HCT116 (cell line): ENCODE measurements at regions of chr10 and their contacts with region 1.

Region 1: DNA sequence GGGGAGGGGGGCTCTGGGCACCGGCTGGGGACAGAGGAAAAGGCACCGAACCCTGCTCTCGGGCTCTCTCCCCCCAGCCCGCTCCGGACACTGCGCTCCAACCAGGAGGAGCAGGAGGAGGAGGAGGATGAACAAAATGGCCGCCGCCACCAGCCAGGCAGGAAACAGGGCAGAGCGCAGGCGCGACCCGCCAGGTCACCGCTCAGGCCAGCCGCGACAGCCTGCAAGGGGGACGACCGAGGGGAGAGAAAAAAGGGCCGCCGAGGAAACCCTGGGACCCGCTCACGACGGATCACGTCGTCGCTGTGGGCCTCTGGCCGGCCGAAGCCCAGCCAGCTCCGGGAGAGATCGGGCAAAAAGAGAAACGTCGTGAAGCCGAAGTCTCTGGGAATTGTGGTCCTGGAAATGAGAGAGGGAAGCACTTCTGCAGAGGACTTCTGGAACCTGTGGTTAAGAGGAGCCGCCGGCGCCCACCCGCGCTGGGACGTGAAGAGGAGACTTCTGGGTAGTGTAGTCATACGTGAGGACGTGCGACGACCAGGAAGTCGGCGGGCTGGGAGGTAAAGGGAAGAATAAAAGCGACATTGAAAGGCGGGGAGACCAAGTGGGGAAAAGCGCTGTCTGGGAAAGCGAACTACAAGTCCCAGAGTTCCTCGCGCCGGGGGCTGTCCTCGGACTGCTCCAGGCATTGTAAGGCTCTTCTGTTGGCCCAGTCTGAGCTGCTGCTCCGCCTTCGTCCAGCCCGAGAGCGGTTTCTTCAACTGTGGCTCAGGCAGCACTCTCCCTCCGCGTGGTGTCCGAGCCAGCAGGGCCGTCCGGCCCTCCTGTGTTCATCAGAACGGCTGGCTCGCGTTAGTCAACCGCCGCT is at the start of gene TIAL1:
- DNase-seq: peak; percentile 100
- ATAC-seq: peak; percentile 88
- H3K4me3 ChIP-seq: peak within 1 kb of the TSS; percentile 85 to 88
- H3K27ac ChIP-seq: peak within 1 kb of the TSS; percentile 97
- H3K4me1 ChIP-seq: peaks cover 13 to 23% of the 10 kb centered on the region in 2 experiments
- H3K27me3 ChIP-seq: no peaks in the 10 kb centered on the region
- CTCF ChIP-seq: no peak
- POLR2A ChIP-seq: peak; percentile 97
- RAD21 ChIP-seq: no peak
- total RNA-seq, gene TIAL1: 220 TPM

Region 2: DNA sequence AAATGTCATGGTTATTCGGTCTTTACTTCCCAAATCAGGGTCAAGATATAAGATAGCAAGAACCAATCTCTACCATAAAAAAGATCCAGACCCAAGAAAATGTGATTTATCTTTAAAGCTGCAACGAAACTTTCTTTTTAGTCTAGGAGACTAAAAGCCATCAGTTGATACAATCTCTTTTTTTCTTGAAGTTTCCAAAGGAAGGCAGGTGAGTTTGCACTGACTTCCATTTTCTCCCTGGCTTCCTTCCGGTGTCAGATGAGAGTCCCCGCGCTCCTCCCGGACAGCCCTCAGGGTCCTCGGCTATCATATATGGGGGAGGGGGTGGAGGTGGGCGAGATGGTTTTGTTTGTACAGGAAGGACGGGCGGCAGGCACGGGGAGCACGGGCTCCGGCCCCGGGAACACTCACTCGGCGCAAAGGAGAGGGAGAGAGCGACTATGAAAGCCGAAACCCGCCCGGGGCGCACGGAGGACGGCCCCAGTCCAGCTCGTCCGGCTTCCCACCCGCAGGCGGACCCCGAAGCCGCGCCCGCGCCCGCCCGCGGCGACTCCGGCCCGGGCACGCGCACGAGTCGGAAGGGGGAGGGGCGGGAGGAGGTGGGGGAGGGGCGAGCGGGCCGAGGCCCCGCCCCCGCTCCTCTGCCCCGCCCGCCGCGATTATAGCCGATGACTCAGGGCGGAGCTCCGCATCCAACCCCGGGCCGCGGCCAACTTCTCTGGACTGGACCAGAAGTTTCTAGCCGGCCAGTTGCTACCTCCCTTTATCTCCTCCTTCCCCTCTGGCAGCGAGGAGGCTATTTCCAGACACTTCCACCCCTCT is 54.1 kb after region 1 on chr10 and contains the start of gene BAG3:
- CTCF ChIA-PET with region 1: no interaction called
- POLR2A ChIA-PET with region 1: interaction called, 8 read pairs
- RAD21 ChIA-PET with region 1: no interaction called
- intact Hi-C with region 1: loop called (anchors 2 kb)
- DNase-seq: peak; percentile 80
- ATAC-seq: peak; percentile 88
- H3K4me3 ChIP-seq: peak within 1 kb of the TSS; percentile 83 to 90
- H3K27ac ChIP-seq: peak within 1 kb of the TSS; percentile 94
- H3K4me1 ChIP-seq: peaks cover 13 to 41% of the 10 kb centered on the region in 2 experiments
- H3K27me3 ChIP-seq: no peaks in the 10 kb centered on the region
- CTCF ChIP-seq: no peak
- POLR2A ChIP-seq: peak; percentile 98
- RAD21 ChIP-seq: no peak
- total RNA-seq, gene BAG3: 57.0 TPM

Region 3: DNA sequence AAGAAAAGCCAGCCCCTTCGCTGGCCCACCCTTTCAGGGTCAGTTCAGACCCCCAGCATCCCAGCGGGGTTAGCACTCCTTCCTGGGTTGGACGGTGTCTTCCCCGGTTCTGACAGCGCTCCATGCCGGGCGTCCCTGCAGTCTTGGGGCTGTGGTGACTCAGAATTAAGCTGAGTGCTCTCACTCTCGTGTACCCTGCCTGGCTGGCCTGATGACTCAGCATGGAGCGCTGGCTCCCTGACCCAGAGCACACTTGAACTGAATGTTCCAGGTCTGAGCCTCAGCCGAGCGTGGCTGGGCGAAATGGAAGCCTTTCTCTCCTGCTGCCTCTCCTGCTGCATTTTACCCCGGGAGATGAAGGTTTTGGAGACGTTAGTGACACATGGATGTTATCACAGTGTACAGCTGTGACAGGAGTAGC is 61.5 kb after region 1 on chr10:
- CTCF ChIA-PET with region 1: no interaction called
- POLR2A ChIA-PET with region 1: no interaction called
- RAD21 ChIA-PET with region 1: no interaction called
- intact Hi-C with region 1: loop called (anchors 2 kb)
- DNase-seq: peak; percentile 72
- ATAC-seq: peak; percentile 98
- H3K4me3 ChIP-seq: peak overlapping the region; percentile 12 to 42
- H3K27ac ChIP-seq: peak overlapping the region; percentile 79
- H3K4me1 ChIP-seq: peaks cover 40 to 83% of the 10 kb centered on the region in 2 experiments
- H3K27me3 ChIP-seq: no peaks in the 10 kb centered on the region
- CTCF ChIP-seq: no peak
- POLR2A ChIP-seq: no peak
- RAD21 ChIP-seq: no peak